Mucosa of descending colon (tissue), 3 donors: ENCODE measurements at regions of chr3 and their contacts with region 1.

Region 1: GRCh38 chr3:100590114-100590839 is 19.1 kb upstream of the ADGRG7 start:
- DNase-seq: peak in 1 of 3 donors; percentile 76
- ATAC-seq: peak; percentile 95
- H3K4me3 ChIP-seq: no peak overlapping the region
- H3K4me1 ChIP-seq: peaks cover 5% of the 10 kb centered on the region
- CTCF ChIP-seq: peak; percentile 73

Region 2: GRCh38 chr3:100463002-100463401 is 127.3 kb before region 1 on chr3:
- intact Hi-C with region 1: loop called (anchors 5 kb)
- DNase-seq: peak in 1 of 3 donors; percentile 49
- ATAC-seq: peak; percentile 84
- H3K4me3 ChIP-seq: no peak overlapping the region
- H3K4me1 ChIP-seq: no peaks in the 10 kb centered on the region
- CTCF ChIP-seq: peak; percentile 23

Region 3: GRCh38 chr3:100710261-100710968 is 120.1 kb after region 1 on chr3:
- intact Hi-C with region 1: loop called in 1 of 2 experiments (anchors 2 kb)
- DNase-seq: peak; percentile 60 to 81 (median 68)
- ATAC-seq: peak; percentile 65
- H3K4me3 ChIP-seq: peak overlapping the region; percentile 86
- H3K4me1 ChIP-seq: peaks cover 14% of the 10 kb centered on the region
- CTCF ChIP-seq: no peak